HepG2 (cell line): ENCODE measurements at regions of chr11 and their contacts with region 1.

Region 1: DNA sequence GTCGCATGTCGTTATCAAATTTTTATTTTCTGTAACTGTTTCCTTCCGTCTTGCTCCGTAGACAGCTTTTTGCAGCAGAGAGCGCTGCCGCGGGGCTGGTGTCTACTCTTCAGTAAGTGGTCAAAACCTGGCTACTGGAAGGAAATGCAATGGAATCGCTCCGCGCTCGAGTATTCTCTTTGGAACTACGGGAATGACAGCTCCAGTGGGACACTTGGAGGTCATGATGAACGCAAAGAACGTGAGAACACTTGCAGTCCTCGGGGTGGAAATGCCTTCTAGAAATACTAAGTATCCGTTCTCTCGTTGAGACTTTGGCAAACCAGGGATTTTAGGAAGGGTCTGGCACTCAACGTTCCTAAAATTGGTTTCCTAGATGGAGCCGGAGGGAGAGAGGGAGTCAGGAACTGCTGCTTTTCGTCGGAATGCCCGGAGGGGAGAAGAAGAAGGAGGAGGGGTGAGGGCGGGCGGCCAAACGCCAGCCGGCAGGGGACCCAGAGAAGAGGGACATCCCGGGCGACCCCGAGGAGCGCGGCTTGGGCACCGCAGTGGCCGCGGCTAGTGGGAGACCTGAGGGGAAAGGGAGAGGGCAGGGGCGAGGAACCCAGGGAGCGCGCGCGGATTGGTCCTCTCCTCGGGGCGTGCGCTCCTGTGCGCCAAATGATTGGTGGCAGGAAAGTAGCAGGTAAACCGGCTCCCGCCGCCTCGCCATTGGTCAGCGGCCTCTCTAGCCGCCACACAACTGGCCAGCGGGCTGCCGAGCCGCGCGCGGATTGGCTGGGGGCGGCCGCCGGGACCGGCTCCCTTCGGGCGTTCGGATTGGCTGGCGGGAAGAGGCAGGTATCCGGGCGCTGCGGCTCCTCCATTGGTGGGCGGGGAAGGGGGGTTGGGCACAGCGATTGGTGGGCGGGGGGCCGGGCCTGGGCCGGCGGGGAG is 490 bp upstream of the BMAL1 start:
- DNase-seq: peak; percentile 89
- ATAC-seq: peak; percentile 97
- H3K4me3 ChIP-seq: peak overlapping the region; percentile 72 to 85 (median 74)
- H3K27ac ChIP-seq: no peak overlapping the region
- H3K4me1 ChIP-seq: no peaks in the 10 kb centered on the region; the same call in 1 of the 2 replicates
- H3K27me3 ChIP-seq: peaks cover 3 to 41% of the 10 kb centered on the region in 2 experiments; a peak in 4 of 5 replicates
- CTCF ChIP-seq: no peak
- EP300 ChIP-seq: no peak
- POLR2A ChIP-seq: peak in 1 of 2 experiments; percentile 63; a peak in 1 of 4 replicates
- RAD21 ChIP-seq: no peak

Region 2: DNA sequence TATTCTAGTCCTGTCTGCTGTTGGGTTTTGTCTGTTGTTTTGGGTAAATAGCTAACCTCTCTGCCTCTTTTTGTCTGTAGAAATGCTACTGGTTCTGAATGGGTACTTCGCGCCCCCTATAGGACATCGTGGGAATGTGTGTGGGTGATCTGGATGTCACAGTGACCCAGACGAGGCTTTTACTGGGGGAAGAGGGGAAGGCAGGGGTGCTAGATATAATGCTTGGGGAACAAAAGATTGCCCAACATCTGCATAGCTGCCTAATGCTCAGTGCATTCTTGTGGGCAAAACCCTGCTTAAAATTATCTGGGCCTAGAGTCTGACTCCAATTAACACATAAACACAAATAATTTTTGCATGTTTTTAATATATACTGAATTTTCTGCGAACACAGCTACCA is 58.2 kb after region 1 on chr11:
- CTCF ChIA-PET with region 1: no interaction called
- POLR2A ChIA-PET with region 1: no interaction called
- in situ Hi-C with region 1: no loop called
- intact Hi-C with region 1: loop called (anchors 10 kb)
- DNase-seq: peak; percentile 49
- ATAC-seq: peak; percentile 71
- H3K4me3 ChIP-seq: no peak overlapping the region
- H3K27ac ChIP-seq: no peak overlapping the region
- H3K4me1 ChIP-seq: peaks cover 39% of the 10 kb centered on the region
- H3K27me3 ChIP-seq: no peaks in the 10 kb centered on the region; a peak in 1 of 5 replicates
- CTCF ChIP-seq: peak; percentile 81
- EP300 ChIP-seq: no peak
- POLR2A ChIP-seq: no peak
- RAD21 ChIP-seq: no peak